Left colon (tissue), 2 donors: ENCODE measurements at regions of chr12 and their contacts with region 1.

Region 1: DNA sequence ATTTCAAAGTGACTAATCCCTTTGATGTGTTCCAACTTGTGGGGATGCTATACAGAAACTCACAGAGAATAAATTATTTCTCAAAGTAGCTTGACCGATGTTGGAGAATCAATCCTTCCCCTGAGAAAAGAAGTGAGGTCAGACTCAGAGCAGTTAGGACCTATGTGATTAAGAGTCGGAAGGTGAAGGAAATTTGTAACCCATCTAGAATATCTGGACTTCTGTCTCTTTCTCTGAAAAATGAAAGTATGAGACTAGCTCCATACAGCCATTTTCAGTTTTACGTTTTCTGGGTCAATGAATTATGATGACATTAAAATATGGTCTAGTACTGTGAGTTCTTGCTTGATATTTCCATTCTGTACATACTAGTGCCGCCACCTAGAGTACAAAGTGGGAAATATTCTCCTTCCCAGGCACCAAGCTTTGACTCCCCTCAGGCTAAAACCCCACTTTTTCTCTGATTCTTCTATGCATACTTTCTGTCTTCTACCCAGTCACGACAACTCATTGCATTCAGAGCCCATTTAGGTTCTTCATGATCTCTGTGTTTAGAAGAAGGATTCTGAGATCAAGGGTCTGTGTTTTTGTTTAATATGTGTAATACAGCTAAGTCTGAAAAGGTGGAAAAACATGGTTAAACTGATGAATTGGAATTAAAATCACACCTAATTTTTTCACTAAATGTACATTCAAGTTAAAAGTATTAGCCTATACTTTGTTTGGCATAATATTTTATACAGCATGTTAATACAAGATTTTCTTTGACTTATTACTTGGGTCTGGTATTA is 6.9 kb upstream of the NTS start:
- DNase-seq: no peak
- ATAC-seq: peak; percentile 61

Region 2: DNA sequence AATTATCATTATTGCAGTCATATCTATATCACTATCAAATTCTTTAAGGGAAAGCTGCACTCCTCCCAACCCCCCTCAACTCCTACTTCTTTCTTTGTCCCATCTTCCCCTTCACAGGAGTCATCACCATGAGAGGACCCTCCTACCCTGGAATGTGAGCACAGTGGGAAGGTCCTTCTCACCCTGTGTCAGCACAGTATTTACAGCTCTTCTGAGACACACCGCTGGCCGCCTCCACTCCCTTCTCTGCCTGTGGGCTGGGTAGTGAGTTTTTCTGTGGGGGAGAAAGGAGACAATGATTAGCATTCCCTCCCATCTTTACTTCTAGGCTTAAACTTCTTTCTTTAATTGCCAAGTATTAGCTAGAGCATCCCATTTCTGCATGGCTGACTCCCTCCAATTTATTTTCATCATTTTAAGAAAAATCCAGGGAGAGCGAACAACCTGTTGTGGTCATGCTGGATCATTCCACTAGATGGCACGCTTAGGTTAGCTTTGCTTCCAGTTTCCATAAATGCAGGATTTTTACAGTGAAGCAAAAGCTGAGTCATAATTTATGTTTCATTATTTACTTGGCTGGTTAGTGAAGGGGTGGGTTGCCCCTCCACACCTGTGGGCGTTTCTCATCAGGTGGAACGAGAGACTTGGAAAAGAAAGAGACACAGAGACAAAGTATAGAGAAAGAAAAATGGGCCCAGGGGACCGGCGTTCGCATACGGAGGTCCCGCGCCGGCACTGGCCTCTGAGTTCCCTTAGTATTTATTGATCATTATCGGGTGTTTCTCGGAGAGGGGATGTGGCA is 398.6 kb before region 1 on chr12:
- intact Hi-C with region 1: loop called in 1 of 2 experiments (anchors 5 kb)
- DNase-seq: peak; percentile 33 to 41
- ATAC-seq: peak; percentile 85

Region 3: GRCh38 chr12:85575120-85576096 is 291.8 kb before region 1 on chr12:
- intact Hi-C with region 1: loop called in 1 of 2 experiments (anchors 10 kb)
- DNase-seq: peak in 1 of 2 donors; percentile 36
- ATAC-seq: peak; percentile 70